ENCODE measurements at regions of chr15 and their contacts with region 1.

Region 1: DNA sequence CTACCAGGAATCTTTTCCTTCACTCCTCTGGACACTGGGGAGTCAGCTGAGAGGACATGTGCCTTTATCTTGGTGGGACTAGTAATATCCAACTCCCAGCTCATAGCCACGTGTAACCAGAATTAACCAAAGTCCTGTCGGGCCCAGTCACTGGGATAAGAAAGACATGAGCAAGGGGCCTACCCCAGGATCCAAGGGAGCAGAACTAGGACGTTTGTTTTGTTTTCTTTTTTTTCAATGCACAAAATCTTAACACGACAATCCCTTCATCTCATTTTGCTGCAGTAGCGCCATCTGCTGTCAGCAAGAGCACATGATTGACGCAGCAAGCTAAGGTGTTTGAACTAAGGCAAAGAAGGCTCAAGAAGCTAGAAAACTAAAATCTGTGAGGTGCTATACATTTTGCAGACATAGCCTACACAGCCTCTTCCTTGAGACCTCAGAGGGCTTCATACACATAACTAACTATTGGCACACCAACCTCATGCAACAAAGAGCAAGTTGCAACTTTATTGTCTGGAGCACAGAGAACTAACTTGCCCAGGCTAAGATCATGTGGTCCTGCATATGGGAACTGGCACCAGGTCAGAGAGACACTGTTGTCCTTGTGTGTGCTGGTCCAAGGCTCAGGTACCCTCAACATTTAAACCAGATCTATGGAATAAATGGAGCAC is 43.6 kb downstream of the RLBP1 start:
- DNase-seq: peak; percentile 52
- H3K4me3 Mint-ChIP-seq: no peak overlapping the region
- H3K27ac Mint-ChIP-seq: peak overlapping the region; percentile 59
- H3K4me1 Mint-ChIP-seq: peaks cover 38% of the 10 kb centered on the region
- H3K27me3 Mint-ChIP-seq: no peaks in the 10 kb centered on the region

Region 2: DNA sequence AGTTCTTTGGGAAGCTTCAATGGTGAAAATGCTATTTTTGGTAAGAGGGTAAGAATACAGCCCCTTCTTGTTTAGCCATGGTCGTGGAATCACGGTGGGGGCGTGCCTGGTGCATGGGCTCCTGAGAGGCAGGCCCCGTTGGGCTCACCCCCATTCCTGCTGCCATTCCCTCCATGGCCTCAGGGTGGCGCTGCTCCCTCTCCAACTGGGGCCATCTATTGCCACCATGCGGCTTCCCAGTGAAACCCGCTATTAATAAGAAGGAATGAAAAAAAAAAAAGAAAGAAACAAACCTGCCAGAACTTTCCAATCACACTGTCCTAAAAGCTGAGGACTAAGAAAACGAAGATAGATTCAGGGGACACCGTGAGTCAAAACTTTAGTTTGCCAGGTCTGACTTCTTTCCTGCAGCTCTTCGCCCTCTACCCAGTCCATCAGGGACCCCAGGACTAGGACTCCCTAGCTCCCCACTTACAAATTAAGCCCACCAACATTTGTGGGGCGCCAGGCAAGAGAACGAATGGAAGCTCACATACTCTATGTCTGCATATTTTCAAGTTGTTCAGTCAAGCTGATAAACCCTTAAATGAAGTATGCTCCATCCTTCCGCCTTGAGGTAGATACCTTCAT is 120.2 kb before region 1 on chr15:
- intact Hi-C with region 1: loop called (anchors 1 kb)
- DNase-seq: peak; percentile 72
- H3K4me3 Mint-ChIP-seq: no peak overlapping the region
- H3K27ac Mint-ChIP-seq: no peak overlapping the region
- H3K4me1 Mint-ChIP-seq: peaks cover 7% of the 10 kb centered on the region
- H3K27me3 Mint-ChIP-seq: no peaks in the 10 kb centered on the region

Region 3: DNA sequence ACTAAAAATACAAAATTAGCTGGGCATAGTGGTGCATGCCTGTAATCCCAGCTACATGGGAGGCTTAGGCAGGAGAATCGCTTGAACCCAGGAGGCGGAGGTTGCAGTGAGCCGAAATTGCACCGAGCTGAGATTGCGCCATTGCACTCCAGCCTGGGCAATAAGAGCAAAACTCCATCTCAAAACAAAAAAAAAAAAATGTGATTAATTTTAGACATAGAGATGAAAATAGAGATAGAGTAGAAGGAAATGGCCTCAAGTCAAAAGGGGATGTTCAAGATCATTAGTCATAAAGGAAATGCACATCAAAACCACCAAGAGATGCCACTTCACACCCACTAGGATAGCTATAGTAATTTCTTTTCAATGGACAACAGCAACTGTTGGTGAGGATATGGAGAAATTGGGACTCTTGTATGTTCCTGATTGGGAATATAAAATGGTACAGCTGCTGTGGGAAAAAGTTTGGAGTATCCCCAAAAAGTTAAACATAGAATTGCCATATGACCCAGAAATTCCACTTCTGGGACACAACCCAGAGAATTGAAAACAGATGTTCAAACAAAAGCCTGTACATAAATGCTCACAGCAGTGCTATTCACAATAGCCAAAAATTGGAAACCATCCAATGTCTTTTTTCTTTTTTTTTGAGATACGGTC is 34.1 kb before region 1 on chr15:
- intact Hi-C with region 1: loop called (anchors 5 kb)
- DNase-seq: no peak
- H3K4me3 Mint-ChIP-seq: no peak overlapping the region
- H3K27ac Mint-ChIP-seq: no peak overlapping the region
- H3K4me1 Mint-ChIP-seq: peaks cover 29% of the 10 kb centered on the region
- H3K27me3 Mint-ChIP-seq: no peaks in the 10 kb centered on the region

Region 4: GRCh38 chr15:89197503-89197971 is 19.8 kb after region 1 on chr15:
- intact Hi-C with region 1: loop called (anchors 1 kb)
- DNase-seq: no peak
- H3K4me3 Mint-ChIP-seq: peak overlapping the region; percentile 45
- H3K27ac Mint-ChIP-seq: peak overlapping the region; percentile 90
- H3K4me1 Mint-ChIP-seq: peaks cover 54% of the 10 kb centered on the region
- H3K27me3 Mint-ChIP-seq: no peaks in the 10 kb centered on the region

Measured in activated T-helper 2 cell treated with anti-CD3 and anti-CD28 coated beads, Interferon-gamma antibody, Interleukin-2, Interleukin-4, amounts not matched to agents 10 μg/mL and 5 μg/mL and 100 μg/mL, durations not matched to agents 14 hours and 24 hours and 36 hours (primary cell).